ENCODE measurements at regions of chr22 and their contacts with region 1.

Region 1: DNA sequence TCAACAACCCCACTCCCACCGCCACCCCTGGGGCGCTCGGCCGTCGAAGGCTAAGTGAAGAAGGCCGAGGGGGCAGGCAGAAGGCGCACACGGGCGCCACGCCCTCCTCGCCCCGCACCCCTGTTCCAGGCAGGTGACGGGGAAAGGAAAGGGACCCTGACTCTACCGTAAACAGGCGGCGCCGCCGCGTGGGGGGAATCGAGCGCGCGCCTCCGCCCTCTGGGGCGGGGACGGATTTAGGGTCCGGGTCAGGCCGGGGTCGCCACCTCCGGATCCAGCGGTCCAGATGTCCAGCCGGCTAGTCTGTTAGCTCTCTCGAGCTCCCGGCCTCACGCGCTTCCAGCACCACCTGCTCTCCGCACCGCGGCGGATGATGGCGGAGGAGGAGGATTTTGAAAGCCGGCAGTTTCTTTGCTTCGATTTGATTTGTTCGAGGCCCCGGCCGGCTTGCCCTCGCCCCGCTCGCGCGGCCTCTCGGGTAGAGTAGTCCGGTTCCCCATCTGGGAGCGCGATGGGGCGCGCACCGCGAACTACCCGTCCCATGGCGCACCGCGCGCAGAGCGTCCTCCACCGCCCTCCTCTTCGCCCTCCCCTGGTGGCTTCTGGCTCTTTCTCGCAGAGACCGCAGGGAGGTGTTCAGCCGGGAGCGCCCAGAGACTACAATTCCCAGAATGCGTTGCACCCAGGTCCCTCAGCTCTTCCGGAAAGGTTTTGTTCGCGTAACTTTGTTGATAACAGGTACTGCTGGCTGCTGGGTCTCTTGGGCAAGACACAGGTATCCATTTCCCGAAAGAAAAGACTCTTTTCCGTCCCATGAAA is at the start of gene RANGAP1:
- DNase-seq: peak; percentile 99
- H3K4me3 ChIP-seq: peak within 1 kb of the TSS; percentile 95
- H3K27ac ChIP-seq: peak within 1 kb of the TSS; percentile 89
- H3K4me1 ChIP-seq: peaks cover 27% of the 10 kb centered on the region
- CTCF ChIP-seq: no peak
- total RNA-seq, gene RANGAP1: 81.7 and 108 TPM in 2 replicates

Region 2: DNA sequence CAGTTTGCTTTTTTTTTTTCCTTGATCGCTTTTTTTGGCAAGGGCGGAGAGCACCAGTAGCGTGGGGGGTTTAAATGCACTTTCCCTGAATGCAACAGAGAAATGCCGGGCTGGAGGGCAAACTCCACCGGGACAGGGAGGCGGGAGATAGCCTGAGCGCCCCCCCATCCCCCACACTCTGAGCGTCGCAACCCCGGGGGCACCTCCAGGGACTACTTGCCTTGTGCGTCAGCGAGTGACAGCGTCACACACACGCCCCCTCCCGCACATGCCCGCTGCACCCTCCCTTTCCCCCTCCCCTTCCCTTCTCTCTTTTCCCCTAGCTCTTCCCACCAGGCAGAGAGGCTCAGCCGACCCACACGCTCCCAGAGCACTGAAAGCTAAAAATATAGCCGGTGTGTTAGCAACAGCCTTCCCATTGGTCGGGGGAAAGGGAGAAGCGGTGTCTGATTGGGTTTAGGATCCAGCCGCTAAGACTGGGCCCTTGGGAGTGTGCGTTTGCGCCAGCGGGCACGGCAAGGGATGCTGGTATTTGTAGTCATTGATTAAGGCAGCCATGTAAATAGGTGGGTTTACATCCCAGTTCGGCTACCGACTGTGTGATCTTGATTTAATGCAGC is 162.3 kb after region 1 on chr22:
- CTCF ChIA-PET with region 1: no interaction called
- POLR2A ChIA-PET with region 1: no interaction called
- intact Hi-C with region 1: loop called (anchors 5 kb)
- DNase-seq: peak; percentile 97
- H3K4me3 ChIP-seq: peak overlapping the region; percentile 83
- H3K27ac ChIP-seq: peak overlapping the region; percentile 85
- H3K4me1 ChIP-seq: peaks cover 14% of the 10 kb centered on the region
- CTCF ChIP-seq: no peak

Region 3: DNA sequence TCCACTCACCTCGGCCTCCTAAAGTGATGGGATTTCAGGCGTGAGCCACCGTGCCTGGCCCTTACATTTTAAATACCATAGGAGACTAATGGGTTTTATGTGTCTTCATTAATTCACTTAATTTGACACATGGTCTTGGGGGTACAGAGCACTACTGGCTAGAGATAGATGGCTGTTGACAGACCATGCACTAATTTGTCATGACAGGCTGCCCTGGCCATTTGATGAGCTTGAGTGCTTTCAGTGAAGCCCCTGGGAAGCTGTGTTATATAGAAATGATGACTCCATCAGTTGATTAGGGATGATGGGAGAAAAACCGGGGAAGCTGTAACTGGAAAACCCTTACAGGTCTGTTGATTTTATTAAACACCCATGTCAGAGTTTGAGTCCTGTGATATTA is 175.9 kb after region 1 on chr22:
- CTCF ChIA-PET with region 1: no interaction called
- POLR2A ChIA-PET with region 1: no interaction called
- intact Hi-C with region 1: no loop called
- DNase-seq: no peak
- H3K4me3 ChIP-seq: no peak overlapping the region
- H3K27ac ChIP-seq: no peak overlapping the region
- H3K4me1 ChIP-seq: peaks cover 6% of the 10 kb centered on the region
- CTCF ChIP-seq: no peak